ENCODE measurements at regions of chr1 and their contacts with region 1.

Region 1: GRCh38 chr1:211323156-211324063 is 3.2 kb upstream of the TRAF5 start:
- DNase-seq: peak; percentile 59
- H3K4me3 Mint-ChIP-seq: no peak overlapping the region
- H3K27ac Mint-ChIP-seq: peak overlapping the region; percentile 74
- H3K4me1 Mint-ChIP-seq: peaks cover 57% of the 10 kb centered on the region
- H3K27me3 Mint-ChIP-seq: no peaks in the 10 kb centered on the region

Region 2: DNA sequence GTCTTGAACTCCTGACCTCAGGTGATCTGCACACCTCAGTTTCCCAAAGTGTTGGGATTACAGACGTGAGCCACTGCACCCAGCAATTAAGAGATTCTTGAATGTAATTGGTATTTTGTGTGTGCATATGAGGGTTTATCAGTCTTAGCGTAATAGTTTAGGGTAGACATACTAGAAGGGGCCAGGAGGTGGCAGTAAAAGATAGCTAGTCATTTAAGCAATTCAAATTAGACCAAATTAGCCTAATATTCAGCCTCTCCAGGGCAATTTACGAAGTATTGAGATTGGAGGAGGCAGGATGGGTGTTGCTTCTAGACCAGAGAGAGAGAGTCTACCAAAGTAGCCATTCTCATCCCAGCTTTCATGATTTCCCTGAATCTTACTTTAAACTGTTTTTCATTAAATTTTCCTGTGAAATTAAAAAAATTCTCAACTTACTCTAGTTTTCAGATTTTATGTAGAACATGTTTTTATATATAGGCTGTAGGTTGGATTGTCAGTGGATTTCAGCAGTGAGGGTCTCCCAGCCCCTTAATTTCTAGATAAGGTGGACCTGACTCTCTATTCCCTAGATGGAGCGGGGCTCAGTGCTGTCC is 875.0 kb before region 1 on chr1:
- intact Hi-C with region 1: loop called (anchors 2 kb)
- DNase-seq: no peak
- H3K4me3 Mint-ChIP-seq: no peak overlapping the region
- H3K27ac Mint-ChIP-seq: no peak overlapping the region
- H3K4me1 Mint-ChIP-seq: peaks cover 21% of the 10 kb centered on the region
- H3K27me3 Mint-ChIP-seq: peaks cover 20% of the 10 kb centered on the region

Region 3: GRCh38 chr1:211296396-211296795 is 27.0 kb before region 1 on chr1:
- intact Hi-C with region 1: loop called (anchors 2 kb)
- DNase-seq: no peak
- H3K4me3 Mint-ChIP-seq: no peak overlapping the region
- H3K27ac Mint-ChIP-seq: peak overlapping the region; percentile 75
- H3K4me1 Mint-ChIP-seq: peaks cover 26% of the 10 kb centered on the region
- H3K27me3 Mint-ChIP-seq: no peaks in the 10 kb centered on the region

Region 4: GRCh38 chr1:211335522-211336157 is 12.2 kb after region 1 on chr1:
- intact Hi-C with region 1: no loop called
- DNase-seq: no peak
- H3K4me3 Mint-ChIP-seq: peak overlapping the region; percentile 70
- H3K27ac Mint-ChIP-seq: peak overlapping the region; percentile 86
- H3K4me1 Mint-ChIP-seq: peaks cover 69% of the 10 kb centered on the region
- H3K27me3 Mint-ChIP-seq: no peaks in the 10 kb centered on the region

Region 5: DNA sequence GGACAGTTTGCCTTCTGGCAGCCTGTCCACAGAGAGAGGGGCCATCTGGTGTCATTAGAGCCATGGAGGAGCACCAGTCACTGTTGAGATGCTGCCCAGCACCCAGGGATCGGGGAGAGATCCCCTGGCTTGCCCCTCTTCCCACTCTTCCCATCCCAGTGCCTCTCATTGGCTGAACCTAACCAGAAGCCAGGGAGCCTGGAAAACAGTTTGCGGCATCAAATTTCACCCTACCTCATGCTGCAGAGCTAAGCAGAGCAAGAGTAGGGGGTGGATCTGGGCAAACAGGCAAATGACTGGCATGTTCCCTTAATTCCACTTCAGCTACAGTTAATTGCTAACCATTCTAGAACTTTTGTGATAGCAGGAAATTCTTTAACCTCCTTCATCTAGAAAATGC is 22.3 kb after region 1 on chr1:
- intact Hi-C with region 1: no loop called
- DNase-seq: no peak
- H3K4me3 Mint-ChIP-seq: no peak overlapping the region
- H3K27ac Mint-ChIP-seq: no peak overlapping the region
- H3K4me1 Mint-ChIP-seq: peaks cover 49% of the 10 kb centered on the region
- H3K27me3 Mint-ChIP-seq: no peaks in the 10 kb centered on the region

Region 6: DNA sequence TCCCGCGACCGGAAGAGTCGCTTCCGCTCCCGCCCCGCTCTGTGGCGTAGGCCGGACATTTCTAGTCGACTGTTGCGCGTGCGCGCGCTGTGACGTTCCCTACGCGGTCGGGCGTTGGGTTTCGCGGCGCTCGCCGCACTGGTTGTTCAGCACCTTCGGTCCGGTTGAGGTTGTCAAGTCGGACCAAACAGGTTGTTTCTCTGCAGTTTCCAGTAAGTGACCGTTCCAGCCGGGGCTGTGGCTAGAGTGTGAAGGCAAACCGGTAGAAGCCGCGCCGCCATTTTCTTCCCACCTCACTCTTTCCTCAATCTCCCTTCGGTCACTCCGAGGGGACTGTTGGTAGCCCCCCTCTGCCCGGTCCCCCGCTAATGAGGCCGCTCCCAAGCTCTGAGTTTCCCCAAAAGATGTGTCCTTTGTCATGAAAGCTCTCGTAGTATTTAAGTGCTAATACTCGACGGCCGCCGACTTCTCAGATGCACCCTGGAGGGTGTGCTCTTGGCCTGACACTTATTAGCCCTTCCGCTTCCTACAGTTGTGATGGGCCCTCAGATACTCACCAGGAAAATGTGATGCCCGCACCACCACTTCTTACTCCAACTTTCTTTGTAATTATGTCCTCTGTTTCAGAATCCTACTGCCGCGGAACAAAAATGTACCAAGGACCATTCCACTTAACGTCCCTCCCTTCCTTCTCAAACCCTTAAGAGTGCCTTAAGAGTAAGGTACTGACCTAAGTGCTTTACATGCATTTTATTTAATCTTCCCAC is 59.5 kb after region 1 on chr1:
- intact Hi-C with region 1: loop called (anchors 1 kb)
- DNase-seq: peak; percentile 79
- H3K4me3 Mint-ChIP-seq: peak overlapping the region; percentile 85
- H3K27ac Mint-ChIP-seq: peak overlapping the region; percentile 96
- H3K4me1 Mint-ChIP-seq: peaks cover 52% of the 10 kb centered on the region
- H3K27me3 Mint-ChIP-seq: no peaks in the 10 kb centered on the region

Region 7: DNA sequence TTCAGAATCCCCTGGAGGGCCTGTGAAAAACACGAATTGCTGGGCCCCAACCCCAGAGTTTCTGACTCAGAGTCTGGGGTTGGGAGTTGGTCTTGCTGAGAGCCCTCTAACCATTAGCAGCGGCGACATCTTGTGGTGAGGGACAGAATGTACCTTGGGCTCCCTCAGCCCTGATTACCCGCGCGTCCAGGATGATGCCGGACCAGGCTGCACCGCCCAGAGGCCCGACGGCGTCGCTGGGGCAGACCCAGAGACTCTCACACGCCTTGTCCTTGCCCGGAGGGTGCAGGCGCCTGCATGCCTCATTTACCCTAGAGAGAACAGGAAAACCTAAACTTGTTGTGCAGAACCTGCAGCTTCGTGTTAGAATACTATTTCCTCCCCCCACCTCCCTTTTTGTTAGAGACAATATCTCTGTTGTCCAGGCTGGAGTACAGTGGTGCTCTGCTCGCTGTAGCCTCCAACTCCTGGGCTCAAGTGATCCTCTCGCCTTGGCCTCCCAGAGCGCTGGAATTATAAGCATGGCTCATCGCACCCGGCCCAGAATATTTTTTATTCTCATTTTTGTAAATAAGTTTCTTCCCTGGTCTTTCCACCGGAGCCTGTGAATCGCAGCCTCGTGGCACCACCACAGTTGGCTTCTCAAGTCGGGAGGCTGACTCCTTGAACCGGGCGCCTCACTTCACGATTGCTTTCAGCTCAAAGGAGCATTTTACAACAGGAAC is 190.8 kb after region 1 on chr1:
- intact Hi-C with region 1: loop called (anchors 1 kb)
- DNase-seq: peak; percentile 65
- H3K4me3 Mint-ChIP-seq: peak overlapping the region; percentile 65
- H3K27ac Mint-ChIP-seq: peak overlapping the region; percentile 44
- H3K4me1 Mint-ChIP-seq: peaks cover 30% of the 10 kb centered on the region
- H3K27me3 Mint-ChIP-seq: peaks cover 7% of the 10 kb centered on the region

Region 8: DNA sequence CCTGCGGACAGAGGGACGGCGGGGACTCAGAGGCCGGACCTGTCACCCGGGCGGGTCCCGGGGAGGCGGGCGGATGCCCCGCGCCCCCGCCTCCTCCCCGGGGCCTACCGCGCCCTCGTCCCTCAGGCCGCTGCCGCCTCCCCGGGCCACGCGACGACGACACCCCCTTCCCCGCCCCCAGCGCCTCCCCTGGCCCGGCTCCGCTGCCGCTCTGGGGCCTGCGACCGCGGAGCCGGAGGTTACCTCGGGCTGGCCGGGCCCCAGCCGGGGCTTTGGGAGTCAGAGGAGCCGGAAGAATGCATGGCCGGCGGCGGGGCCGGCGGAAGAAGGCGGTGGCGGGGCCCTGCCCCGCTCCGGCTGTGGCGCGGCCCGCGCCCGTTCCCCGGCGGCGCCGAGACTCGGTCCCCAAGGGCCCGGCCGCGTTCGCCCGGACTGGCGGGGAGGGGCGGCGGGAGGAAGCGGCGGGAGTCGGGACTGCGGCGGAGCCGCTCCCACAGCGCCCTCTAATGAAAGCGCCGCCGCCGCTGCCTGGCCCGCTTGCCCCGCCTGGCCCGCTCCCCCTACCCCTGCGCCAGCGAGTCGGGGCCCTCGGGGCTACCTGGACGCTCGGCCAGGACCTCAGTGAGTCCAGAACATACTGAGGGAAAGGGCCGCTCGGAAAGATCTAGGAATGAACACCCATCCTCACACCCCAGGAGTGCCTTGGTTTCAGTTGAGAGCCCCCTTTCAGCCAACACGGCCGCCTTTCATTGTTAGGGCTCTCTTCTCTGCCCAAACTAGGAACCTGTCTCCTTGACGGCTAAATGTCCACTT is 507.1 kb after region 1 on chr1 and contains the start of gene LPGAT1:
- intact Hi-C with region 1: loop called (anchors 5 kb)
- DNase-seq: peak; percentile 67
- H3K4me3 Mint-ChIP-seq: peak within 1 kb of the TSS; percentile 92
- H3K27ac Mint-ChIP-seq: peak within 1 kb of the TSS; percentile 78
- H3K4me1 Mint-ChIP-seq: peaks cover 55% of the 10 kb centered on the region
- H3K27me3 Mint-ChIP-seq: peaks cover 6% of the 10 kb centered on the region
- total RNA-seq, gene LPGAT1: 27.8 and 31.1 TPM in 2 replicates

Measured in activated T-helper 2 cell treated with anti-CD3 and anti-CD28 coated beads, Interferon-gamma antibody, Interleukin-2, Interleukin-4, amounts not matched to agents 10 μg/mL and 5 μg/mL and 100 μg/mL, durations not matched to agents 14 hours and 24 hours and 36 hours (primary cell).